Sigmoid colon (tissue), 7 donors: ENCODE measurements at regions of chr10 and their contacts with region 1.

Region 1: GRCh38 chr10:22363305-22363704 is 18.0 kb downstream of the SPAG6 start:
- DNase-seq: no peak
- H3K4me3 ChIP-seq: no peak overlapping the region
- H3K27ac ChIP-seq: no peak overlapping the region
- H3K4me1 ChIP-seq: no peaks in the 10 kb centered on the region
- H3K27me3 ChIP-seq: peaks cover 0 to 4% (median 0%) of the 10 kb centered on the region in 3 donors
- CTCF ChIP-seq: no peak
- EP300 ChIP-seq: no peak
- POLR2A ChIP-seq: no peak

Region 2: GRCh38 chr10:22427890-22428571 is 64.7 kb after region 1 on chr10:
- intact Hi-C with region 1: loop called (anchors 5 kb)
- DNase-seq: no peak
- H3K4me3 ChIP-seq: no peak overlapping the region
- H3K27ac ChIP-seq: no peak overlapping the region
- H3K4me1 ChIP-seq: peaks cover 0 to 6% (median 3%) of the 10 kb centered on the region in 4 donors
- H3K27me3 ChIP-seq: no peaks in the 10 kb centered on the region
- CTCF ChIP-seq: no peak
- EP300 ChIP-seq: no peak
- POLR2A ChIP-seq: no peak